OCI-LY7 (cell line): ENCODE measurements at regions of chr12 and their contacts with region 1.

Region 1: DNA sequence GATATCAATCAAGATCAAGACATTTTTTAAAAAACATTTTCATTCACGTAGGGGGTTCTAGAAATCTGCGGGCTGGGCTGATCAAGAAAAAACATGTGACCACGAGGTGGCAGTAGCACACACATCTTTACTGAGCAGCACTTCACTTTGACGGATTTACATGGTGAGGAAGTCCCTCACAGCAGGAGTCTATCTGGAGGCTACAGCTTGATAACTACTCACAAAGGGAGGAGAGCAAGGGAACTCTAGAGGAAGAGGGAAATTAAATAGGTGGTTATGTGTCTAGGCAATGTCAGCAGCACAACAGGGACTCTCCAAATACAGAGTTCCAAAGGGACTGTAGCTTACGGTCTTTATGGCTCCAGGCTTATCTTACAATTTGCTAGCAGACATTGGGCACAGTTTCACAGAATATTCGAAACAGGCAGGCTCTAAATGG is 248.1 kb downstream of the DPY19L2 start:
- DNase-seq: peak; percentile 67
- H3K4me3 ChIP-seq: no peak overlapping the region
- H3K27ac ChIP-seq: no peak overlapping the region
- H3K4me1 ChIP-seq: no peaks in the 10 kb centered on the region
- CTCF ChIP-seq: peak; percentile 86

Region 2: GRCh38 chr12:63766498-63766897 is 346.3 kb after region 1 on chr12:
- CTCF ChIA-PET with region 1: no interaction called
- POLR2A ChIA-PET with region 1: no interaction called
- intact Hi-C with region 1: loop called (anchors 10 kb)
- DNase-seq: no peak
- H3K4me3 ChIP-seq: no peak overlapping the region
- H3K27ac ChIP-seq: no peak overlapping the region
- H3K4me1 ChIP-seq: no peaks in the 10 kb centered on the region
- CTCF ChIP-seq: peak; percentile 59